ENCODE measurements at regions of chr1 and their contacts with region 1.

Region 1: DNA sequence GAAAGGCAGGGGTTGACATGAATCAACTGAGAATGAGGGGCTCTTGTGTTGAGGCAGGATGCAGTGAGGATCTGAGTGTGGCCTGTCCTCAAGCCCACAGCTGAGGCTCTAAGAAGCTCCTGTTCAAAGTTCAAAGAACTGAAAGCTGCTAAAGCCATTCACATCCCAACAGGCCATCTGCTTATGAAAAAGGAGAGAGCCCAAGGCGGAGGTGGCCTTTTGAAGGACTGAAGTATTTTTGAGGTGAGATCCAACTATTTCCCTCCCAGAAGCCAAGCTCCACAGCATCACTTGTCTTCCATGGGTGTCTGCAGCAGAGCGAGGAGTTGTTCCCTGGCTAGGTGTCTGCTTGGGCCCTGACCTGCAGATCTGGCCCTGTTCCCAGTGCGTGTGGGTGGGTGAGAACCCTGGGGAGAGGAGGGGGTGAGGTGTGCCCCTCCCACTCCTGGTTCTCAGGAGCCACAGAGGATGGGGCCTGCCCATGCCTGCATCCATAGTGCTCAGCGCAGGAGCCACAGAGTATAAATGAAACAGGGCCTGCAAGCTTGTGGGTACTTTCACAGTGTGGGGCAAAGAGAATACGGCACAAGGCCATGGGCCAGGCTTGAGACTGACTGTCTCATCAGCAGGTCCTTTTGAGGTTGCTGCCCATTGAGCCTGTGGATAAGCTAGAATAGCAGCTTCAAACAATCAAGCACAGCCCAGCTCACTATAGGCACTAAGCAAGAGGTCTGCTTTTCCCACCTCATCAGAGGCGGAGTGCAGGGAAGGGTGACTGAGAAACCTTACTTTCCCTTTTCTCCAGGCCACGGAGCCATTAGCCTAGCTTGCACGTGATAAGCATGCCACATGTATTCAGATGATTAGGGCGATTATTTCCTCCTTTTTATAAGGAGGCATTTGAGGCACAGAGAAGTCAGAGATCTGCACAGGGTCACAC is 15.7 kb downstream of the REG4 start:
- DNase-seq: no peak
- CTCF ChIP-seq: no peak

Region 2: GRCh38 chr1:119808972-119809550 is 13.5 kb after region 1 on chr1:
- CTCF ChIA-PET with region 1: interaction called, 53 read pairs
- POLR2A ChIA-PET with region 1: no interaction called
- DNase-seq: peak; percentile 72
- CTCF ChIP-seq: peak; percentile 94

Measured in GM10248 (cell line).